ENCODE measurements at regions of chr2 and their contacts with region 1.

Region 1: DNA sequence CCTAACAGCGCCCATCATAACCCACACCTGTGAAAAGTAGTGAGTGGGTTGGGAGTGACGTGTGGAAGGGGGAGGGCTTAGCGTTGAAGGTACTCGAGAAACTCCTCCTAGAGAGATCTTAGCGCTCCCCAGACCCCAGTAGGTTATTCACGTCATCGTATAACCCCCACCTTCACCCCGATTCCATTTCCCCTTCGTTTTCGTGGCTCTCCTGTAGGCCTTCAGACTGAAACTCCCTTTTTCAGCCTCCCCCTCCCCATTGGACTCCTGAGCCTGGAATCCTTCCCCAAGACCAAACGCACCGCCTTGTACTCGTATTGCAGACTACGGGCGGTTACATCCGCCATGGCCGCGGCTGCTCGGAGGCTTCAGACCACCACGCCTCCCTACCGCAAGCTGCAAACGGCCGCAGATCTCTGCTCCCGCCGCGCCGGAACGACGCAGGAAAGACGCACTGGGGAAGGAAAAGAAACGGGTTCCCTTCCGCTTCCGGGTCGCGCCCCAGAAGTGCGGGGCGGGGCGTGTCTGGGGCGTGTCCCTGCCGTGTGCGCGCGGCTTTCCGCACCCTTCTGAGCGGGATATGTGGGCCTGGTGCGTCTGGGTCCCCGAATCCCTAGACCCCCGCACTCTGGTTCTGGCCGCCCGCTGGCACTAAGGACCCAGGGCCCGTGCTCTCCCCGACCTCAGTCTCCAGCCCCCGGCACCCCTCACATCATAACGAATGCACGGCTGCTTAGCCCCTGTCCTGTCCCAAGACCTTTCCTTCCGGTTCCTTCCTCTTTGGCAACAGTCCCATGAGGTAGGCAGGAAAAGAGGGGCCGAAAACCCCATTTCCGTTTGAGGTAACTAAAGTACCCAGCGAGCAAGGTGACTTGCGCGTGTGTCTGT is at the start of gene SNRNP200:
- DNase-seq: peak; percentile 93
- ATAC-seq: peak; percentile 96
- H3K4me3 ChIP-seq: peak within 1 kb of the TSS; percentile 70 to 97 (median 80)
- H3K4me3 Mint-ChIP-seq: peak within 1 kb of the TSS; percentile 99
- H3K27ac ChIP-seq: peak within 1 kb of the TSS; percentile 89 to 91
- H3K27ac Mint-ChIP-seq: peak within 1 kb of the TSS; percentile 99
- H3K4me1 ChIP-seq: peaks cover 18 to 22% of the 10 kb centered on the region in 2 donors
- H3K4me1 Mint-ChIP-seq: peaks cover 51% of the 10 kb centered on the region
- H3K27me3 ChIP-seq: no peaks in the 10 kb centered on the region
- H3K27me3 Mint-ChIP-seq: no peaks in the 10 kb centered on the region
- CTCF ChIP-seq: no peak
- total RNA-seq, gene SNRNP200: 214 and 216 TPM in 2 replicates

Region 2: GRCh38 chr2:96320728-96321622 is 15.6 kb after region 1 on chr2:
- CTCF ChIA-PET with region 1: interaction called, 6 read pairs
- POLR2A ChIA-PET with region 1: interaction called, 22 read pairs
- intact Hi-C with region 1: loop called (anchors 1 kb)
- DNase-seq: no peak
- ATAC-seq: peak; percentile 9
- H3K4me3 ChIP-seq: peak overlapping the region; percentile 76 to 97 (median 79)
- H3K4me3 Mint-ChIP-seq: peak overlapping the region; percentile 87
- H3K27ac ChIP-seq: peak overlapping the region; percentile 34 to 68
- H3K27ac Mint-ChIP-seq: peak overlapping the region; percentile 84
- H3K4me1 ChIP-seq: peaks cover 33 to 43% of the 10 kb centered on the region in 2 donors
- H3K4me1 Mint-ChIP-seq: peaks cover 49% of the 10 kb centered on the region
- H3K27me3 ChIP-seq: no peaks in the 10 kb centered on the region
- H3K27me3 Mint-ChIP-seq: no peaks in the 10 kb centered on the region
- CTCF ChIP-seq: no peak

Region 3: GRCh38 chr2:96330407-96330806 is 25.1 kb after region 1 on chr2:
- CTCF ChIA-PET with region 1: no interaction called
- POLR2A ChIA-PET with region 1: interaction called, 11 read pairs
- intact Hi-C with region 1: loop called (anchors 1 kb)
- DNase-seq: no peak
- ATAC-seq: no peak
- H3K4me3 ChIP-seq: no peak overlapping the region
- H3K4me3 Mint-ChIP-seq: no peak overlapping the region
- H3K27ac ChIP-seq: no peak overlapping the region
- H3K27ac Mint-ChIP-seq: no peak overlapping the region
- H3K4me1 ChIP-seq: peaks cover 14 to 21% of the 10 kb centered on the region in 2 donors
- H3K4me1 Mint-ChIP-seq: peaks cover 23% of the 10 kb centered on the region
- H3K27me3 ChIP-seq: no peaks in the 10 kb centered on the region
- H3K27me3 Mint-ChIP-seq: no peaks in the 10 kb centered on the region
- CTCF ChIP-seq: no peak

Region 4: DNA sequence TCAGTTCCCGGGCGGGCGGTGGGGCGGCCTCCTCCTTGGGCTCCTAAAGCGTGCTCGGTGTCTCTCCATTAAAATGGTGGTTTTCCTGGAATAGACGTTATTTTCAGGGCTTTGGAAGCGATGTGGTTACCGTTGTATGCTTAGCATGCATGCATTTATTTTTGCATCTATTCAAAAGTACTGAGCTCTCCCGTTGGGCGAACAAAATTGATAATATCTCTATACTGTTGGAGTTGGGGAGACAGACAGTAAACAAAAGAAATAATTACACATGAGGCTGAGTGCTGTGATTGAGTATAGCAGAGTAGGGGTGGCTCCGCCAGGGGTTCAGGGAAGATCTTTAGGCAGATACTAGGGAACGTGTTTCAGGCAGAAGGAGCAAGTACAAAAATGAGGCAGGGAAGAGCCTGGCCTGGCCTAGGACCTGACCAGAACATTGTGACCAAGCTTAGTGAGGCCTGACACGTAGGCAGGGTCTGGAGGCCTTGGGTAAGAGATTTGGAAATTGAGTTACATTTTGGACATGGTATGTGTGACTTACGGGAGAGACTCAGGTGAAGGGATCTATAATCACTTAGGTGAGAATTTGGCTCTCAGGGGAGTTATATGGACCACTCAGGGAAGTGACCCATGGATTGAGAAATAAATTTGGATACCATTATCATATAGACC is 30.9 kb after region 1 on chr2:
- CTCF ChIA-PET with region 1: no interaction called
- POLR2A ChIA-PET with region 1: interaction called, 11 read pairs
- intact Hi-C with region 1: loop called (anchors 1 kb)
- DNase-seq: no peak
- ATAC-seq: no peak
- H3K4me3 ChIP-seq: peak overlapping the region; percentile 15 to 78 (median 61)
- H3K4me3 Mint-ChIP-seq: peak overlapping the region; percentile 71
- H3K27ac ChIP-seq: peak overlapping the region in 1 of 2 donors; percentile 92
- H3K27ac Mint-ChIP-seq: peak overlapping the region; percentile 69
- H3K4me1 ChIP-seq: peaks cover 14 to 22% of the 10 kb centered on the region in 2 donors
- H3K4me1 Mint-ChIP-seq: peaks cover 33% of the 10 kb centered on the region
- H3K27me3 ChIP-seq: no peaks in the 10 kb centered on the region
- H3K27me3 Mint-ChIP-seq: no peaks in the 10 kb centered on the region
- CTCF ChIP-seq: no peak

Region 5: DNA sequence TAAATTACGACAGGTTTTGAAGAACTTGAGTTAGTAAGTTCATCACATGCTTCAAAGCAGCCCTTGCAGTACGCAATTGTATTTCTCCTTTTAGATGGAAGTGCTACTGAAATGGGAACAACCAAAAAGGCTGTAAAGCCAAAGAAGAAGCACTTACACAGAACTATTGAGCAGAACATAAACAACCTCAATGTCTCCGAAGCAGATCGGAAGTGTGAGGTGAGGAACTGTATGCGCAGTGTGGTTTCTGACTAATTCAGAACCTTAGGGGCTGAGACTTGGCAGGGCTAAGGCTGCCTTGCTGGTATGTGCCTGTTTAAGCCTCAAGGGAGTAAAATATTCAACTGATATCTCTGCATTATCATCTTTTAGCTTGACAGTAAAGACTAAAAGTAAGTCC is 38.7 kb after region 1 on chr2:
- CTCF ChIA-PET with region 1: interaction called, 7 read pairs
- POLR2A ChIA-PET with region 1: interaction called, 4 read pairs
- intact Hi-C with region 1: loop called (anchors 2 kb)
- DNase-seq: peak; percentile 70
- ATAC-seq: peak; percentile 97
- H3K4me3 ChIP-seq: peak overlapping the region in 1 of 5 experiments; percentile 25
- H3K4me3 Mint-ChIP-seq: peak overlapping the region; percentile 67
- H3K27ac ChIP-seq: peak overlapping the region; percentile 47 to 55
- H3K27ac Mint-ChIP-seq: peak overlapping the region; percentile 76
- H3K4me1 ChIP-seq: peaks cover 7 to 26% of the 10 kb centered on the region in 2 donors
- H3K4me1 Mint-ChIP-seq: peaks cover 44% of the 10 kb centered on the region
- H3K27me3 ChIP-seq: no peaks in the 10 kb centered on the region
- H3K27me3 Mint-ChIP-seq: no peaks in the 10 kb centered on the region
- CTCF ChIP-seq: no peak